ENCODE measurements at regions of chr7 and their contacts with region 1.

Region 1: GRCh38 chr7:47266131-47266706 is 315.7 kb downstream of the TNS3 start:
- DNase-seq: peak; percentile 69
- H3K4me3 ChIP-seq: no peak overlapping the region
- H3K27ac ChIP-seq: no peak overlapping the region
- H3K4me1 ChIP-seq: no peaks in the 10 kb centered on the region
- H3K27me3 ChIP-seq: no peaks in the 10 kb centered on the region
- CTCF ChIP-seq: peak; percentile 87 to 88
- POLR2A ChIP-seq: no peak

Region 2: DNA sequence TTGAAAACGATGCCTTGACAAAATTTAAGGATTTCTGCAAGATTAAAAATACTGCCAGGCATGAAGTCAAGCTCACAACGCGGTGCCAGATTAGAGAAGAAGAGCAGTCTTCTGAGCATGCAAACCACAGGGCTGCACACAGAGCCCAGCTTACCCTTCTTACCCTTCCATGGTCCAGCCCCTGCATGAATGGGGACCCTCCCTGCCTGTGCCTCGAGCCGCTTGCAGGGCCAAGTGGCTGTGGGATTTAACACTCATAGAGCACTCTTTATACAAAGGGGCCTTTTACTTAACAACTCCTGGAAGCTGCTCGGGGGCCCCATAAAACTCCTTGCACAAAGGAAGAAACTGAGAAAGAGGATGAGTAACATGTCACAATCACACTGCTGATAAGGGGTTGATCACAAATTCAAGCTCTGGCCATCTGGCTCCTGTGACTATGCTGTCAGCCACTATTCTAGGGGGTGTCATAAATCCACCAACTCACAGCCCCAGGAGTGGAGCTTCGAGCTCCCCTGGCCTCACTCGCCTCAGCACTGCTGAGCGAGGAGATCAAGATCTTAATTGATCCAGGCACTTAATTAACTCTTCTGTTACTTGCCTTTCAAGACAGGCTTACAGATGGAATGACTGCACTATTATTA is 199.1 kb before region 1 on chr7:
- CTCF ChIA-PET with region 1: no interaction called
- POLR2A ChIA-PET with region 1: no interaction called
- dilution Hi-C with region 1: no loop called
- intact Hi-C with region 1: no loop called
- DNase-seq: no peak
- H3K4me3 ChIP-seq: no peak overlapping the region
- H3K27ac ChIP-seq: no peak overlapping the region
- H3K4me1 ChIP-seq: no peaks in the 10 kb centered on the region
- H3K27me3 ChIP-seq: peaks cover 6 to 8% of the 10 kb centered on the region in 2 experiments
- CTCF ChIP-seq: no peak
- POLR2A ChIP-seq: no peak

Region 3: DNA sequence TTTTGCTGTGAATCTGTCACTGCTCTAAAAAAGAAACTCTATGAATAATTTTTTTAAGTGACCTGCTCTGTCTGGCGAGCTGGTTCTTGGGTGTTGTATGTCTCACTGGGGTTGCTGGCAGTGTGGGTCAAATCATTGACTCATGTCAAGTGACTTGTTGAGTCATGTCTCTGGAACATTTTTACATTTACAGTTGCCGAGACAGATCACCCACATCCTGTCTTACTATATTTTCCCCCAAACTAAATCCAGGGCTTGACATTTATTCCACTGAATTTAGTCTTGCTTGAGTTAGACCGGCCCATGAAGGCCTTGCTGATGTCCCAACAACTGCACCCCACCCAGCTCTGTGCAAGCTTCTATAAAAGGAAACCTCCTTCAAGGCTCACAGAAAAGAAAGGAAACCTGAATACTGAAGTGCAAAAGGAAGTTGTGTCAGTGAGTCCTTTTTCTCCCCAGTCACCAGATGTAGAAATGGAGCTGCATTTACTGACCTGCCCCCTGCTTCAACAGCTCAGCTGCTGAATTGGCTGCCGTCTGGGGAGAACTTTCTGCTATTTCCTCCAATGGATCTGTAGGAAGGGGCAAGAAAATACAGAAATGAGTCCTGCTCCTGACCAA is 25.4 kb after region 1 on chr7:
- CTCF ChIA-PET with region 1: interaction called, 25 read pairs
- POLR2A ChIA-PET with region 1: no interaction called
- dilution Hi-C with region 1: no loop called
- intact Hi-C with region 1: no loop called
- DNase-seq: peak; percentile 62
- H3K4me3 ChIP-seq: no peak overlapping the region
- H3K27ac ChIP-seq: peak overlapping the region; percentile 90
- H3K4me1 ChIP-seq: peaks cover 20% of the 10 kb centered on the region
- H3K27me3 ChIP-seq: no peaks in the 10 kb centered on the region
- CTCF ChIP-seq: no peak
- POLR2A ChIP-seq: no peak

Region 4: DNA sequence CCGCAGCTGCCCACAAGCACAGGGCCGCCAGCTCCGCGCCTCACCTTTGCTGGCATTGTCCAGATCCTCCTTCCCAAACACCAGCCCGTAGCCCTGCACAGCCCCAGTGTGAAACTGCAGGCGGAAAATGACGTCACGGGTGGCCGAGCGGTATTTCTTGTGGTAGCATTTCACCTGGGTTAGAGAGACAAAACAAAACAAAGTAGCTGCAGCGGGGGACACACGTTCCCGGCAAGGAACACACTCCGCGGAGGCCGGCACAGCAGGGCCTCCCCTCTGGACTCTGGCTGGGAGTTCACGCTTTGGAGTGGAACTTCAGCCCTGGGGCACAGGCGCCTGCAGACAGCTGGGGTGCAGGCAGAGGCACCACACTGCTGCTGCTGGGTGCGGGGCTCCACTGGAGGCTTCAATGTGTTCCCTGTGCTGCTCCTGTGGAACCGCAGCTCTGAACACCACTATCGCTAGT is 134.6 kb after region 1 on chr7:
- CTCF ChIA-PET with region 1: interaction called, 10 read pairs
- POLR2A ChIA-PET with region 1: no interaction called
- dilution Hi-C with region 1: no loop called
- intact Hi-C with region 1: no loop called
- DNase-seq: no peak
- H3K4me3 ChIP-seq: no peak overlapping the region
- H3K27ac ChIP-seq: no peak overlapping the region
- H3K4me1 ChIP-seq: no peaks in the 10 kb centered on the region
- H3K27me3 ChIP-seq: no peaks in the 10 kb centered on the region
- CTCF ChIP-seq: no peak
- POLR2A ChIP-seq: no peak

Region 5: GRCh38 chr7:47444379-47445057 is 178.3 kb after region 1 on chr7:
- CTCF ChIA-PET with region 1: interaction called, 11 read pairs
- POLR2A ChIA-PET with region 1: no interaction called
- dilution Hi-C with region 1: no loop called
- intact Hi-C with region 1: no loop called
- DNase-seq: peak; percentile 23
- H3K4me3 ChIP-seq: no peak overlapping the region
- H3K27ac ChIP-seq: no peak overlapping the region
- H3K4me1 ChIP-seq: no peaks in the 10 kb centered on the region
- H3K27me3 ChIP-seq: no peaks in the 10 kb centered on the region
- CTCF ChIP-seq: peak; percentile 48 to 52
- POLR2A ChIP-seq: no peak

Region 6: GRCh38 chr7:47786557-47787248 is 520.5 kb after region 1 on chr7:
- CTCF ChIA-PET with region 1: interaction called, 17 read pairs
- POLR2A ChIA-PET with region 1: no interaction called
- dilution Hi-C with region 1: no loop called
- intact Hi-C with region 1: no loop called
- DNase-seq: peak; percentile 98
- H3K4me3 ChIP-seq: no peak overlapping the region
- H3K27ac ChIP-seq: peak overlapping the region; percentile 100
- H3K4me1 ChIP-seq: peaks cover 51% of the 10 kb centered on the region
- H3K27me3 ChIP-seq: no peaks in the 10 kb centered on the region
- CTCF ChIP-seq: no peak
- POLR2A ChIP-seq: no peak

Region 7: GRCh38 chr7:47937065-47937683 is 671.0 kb after region 1 on chr7:
- CTCF ChIA-PET with region 1: interaction called, 51 read pairs
- POLR2A ChIA-PET with region 1: no interaction called
- dilution Hi-C with region 1: no loop called
- intact Hi-C with region 1: loop called (anchors 5 kb)
- DNase-seq: no peak
- H3K4me3 ChIP-seq: no peak overlapping the region
- H3K27ac ChIP-seq: no peak overlapping the region
- H3K4me1 ChIP-seq: peaks cover 22% of the 10 kb centered on the region
- H3K27me3 ChIP-seq: no peaks in the 10 kb centered on the region
- CTCF ChIP-seq: no peak
- POLR2A ChIP-seq: no peak

Region 8: DNA sequence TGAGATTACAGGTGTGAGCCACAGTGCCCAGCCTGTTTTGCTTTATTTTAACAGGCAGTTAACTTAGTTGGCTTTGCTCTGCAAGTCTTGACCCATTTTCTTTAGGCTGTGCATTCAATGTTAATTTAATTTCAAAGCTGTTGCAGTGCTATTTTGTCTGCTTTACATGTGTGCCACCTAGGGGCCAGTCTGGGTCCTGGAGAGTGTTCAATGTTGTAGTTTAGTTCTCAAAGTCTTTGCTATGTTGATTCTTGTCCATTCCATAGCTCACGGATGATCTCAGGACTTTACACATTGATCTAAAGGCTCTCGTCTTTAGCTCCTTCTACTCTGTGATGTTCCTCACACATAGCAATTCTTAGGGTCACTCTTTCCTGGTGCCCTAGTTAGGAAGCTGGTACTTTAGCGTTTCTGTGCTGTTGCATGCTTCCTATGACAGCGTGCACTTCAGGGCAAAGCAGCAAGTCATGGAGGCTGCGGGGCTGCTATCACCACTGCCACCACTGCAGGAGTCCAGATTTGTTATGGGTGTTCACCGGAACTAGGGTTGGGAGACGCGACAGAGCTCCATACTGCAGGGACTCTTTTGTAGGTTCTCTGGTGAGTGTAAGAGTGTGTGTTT is 888.7 kb after region 1 on chr7:
- CTCF ChIA-PET with region 1: interaction called, 12 read pairs
- POLR2A ChIA-PET with region 1: no interaction called
- dilution Hi-C with region 1: no loop called
- intact Hi-C with region 1: no loop called
- DNase-seq: peak; percentile 55
- H3K4me3 ChIP-seq: no peak overlapping the region
- H3K27ac ChIP-seq: no peak overlapping the region
- H3K4me1 ChIP-seq: no peaks in the 10 kb centered on the region
- H3K27me3 ChIP-seq: peaks cover 7 to 13% of the 10 kb centered on the region in 2 experiments
- CTCF ChIP-seq: peak; percentile 53 to 66
- POLR2A ChIP-seq: no peak